ENCODE measurements at regions of chr15 and their contacts with region 1.

Region 1: DNA sequence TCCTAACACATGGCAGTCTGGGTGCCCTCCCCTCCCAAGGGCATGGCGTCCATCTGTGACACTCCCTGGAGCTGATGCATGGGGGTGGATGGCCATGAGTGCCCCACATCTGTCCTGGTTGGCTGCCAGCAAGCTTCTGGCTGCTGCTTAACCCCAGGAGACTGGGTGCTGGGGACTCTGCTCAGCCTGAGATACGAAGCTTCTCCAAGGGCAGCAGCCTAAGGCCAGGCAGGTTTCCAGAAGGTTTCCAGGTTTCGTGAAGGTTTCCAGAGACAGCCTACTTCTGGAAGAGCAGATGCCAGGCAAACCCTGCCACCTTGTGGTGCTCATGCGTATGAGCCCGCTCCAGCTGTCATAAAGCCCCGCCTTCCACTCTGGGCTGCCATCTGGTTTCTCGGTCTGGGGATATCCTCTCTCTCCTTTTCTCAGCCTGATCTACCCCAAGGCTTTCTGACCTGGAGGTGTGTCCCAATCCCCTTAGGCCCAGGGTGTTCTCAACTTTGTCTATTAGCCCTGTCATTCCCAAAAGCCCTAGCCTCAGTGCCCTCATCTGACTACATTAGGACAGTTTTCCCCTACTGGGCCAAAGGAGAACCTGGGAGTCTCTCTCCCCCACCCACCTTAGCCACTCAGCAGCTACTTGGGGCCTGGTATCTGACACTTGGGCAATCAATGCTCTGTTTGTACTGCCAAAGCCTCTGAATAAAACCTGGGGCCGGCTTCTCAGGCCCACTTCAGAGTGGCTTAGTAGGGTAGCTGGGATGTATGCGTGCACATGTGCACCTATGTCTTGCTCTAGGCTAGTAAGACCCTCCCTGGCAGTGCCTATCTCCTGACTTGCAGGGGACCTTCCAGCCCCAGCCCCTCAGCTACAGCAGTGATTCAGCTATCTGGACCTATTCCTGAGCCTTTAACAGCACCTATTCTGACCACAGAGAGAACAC is 12.0 kb downstream of the MRPL46 start:
- DNase-seq: peak; percentile 48
- ATAC-seq: peak; percentile 91
- H3K4me3 ChIP-seq: no peak overlapping the region
- H3K27ac ChIP-seq: no peak overlapping the region
- H3K4me1 ChIP-seq: peaks cover 12% of the 10 kb centered on the region; the same call in 1 of the 2 replicates
- H3K27me3 ChIP-seq: no peaks in the 10 kb centered on the region
- CTCF ChIP-seq: peak; percentile 78
- EP300 ChIP-seq: no peak
- POLR2A ChIP-seq: peak in 1 of 2 experiments; percentile 30; a peak in 1 of 4 replicates
- RAD21 ChIP-seq: peak; percentile 56; the same call in 1 of the 2 replicates

Region 2: GRCh38 chr15:88161636-88162035 is 293.5 kb before region 1 on chr15:
- CTCF ChIA-PET with region 1: no interaction called
- POLR2A ChIA-PET with region 1: no interaction called
- in situ Hi-C with region 1: no loop called
- intact Hi-C with region 1: loop called (anchors 5 kb)
- DNase-seq: no peak
- ATAC-seq: no peak
- H3K4me3 ChIP-seq: no peak overlapping the region
- H3K27ac ChIP-seq: no peak overlapping the region
- H3K4me1 ChIP-seq: no peaks in the 10 kb centered on the region
- H3K27me3 ChIP-seq: no peaks in the 10 kb centered on the region
- CTCF ChIP-seq: no peak
- EP300 ChIP-seq: no peak
- POLR2A ChIP-seq: no peak
- RAD21 ChIP-seq: no peak

Region 3: DNA sequence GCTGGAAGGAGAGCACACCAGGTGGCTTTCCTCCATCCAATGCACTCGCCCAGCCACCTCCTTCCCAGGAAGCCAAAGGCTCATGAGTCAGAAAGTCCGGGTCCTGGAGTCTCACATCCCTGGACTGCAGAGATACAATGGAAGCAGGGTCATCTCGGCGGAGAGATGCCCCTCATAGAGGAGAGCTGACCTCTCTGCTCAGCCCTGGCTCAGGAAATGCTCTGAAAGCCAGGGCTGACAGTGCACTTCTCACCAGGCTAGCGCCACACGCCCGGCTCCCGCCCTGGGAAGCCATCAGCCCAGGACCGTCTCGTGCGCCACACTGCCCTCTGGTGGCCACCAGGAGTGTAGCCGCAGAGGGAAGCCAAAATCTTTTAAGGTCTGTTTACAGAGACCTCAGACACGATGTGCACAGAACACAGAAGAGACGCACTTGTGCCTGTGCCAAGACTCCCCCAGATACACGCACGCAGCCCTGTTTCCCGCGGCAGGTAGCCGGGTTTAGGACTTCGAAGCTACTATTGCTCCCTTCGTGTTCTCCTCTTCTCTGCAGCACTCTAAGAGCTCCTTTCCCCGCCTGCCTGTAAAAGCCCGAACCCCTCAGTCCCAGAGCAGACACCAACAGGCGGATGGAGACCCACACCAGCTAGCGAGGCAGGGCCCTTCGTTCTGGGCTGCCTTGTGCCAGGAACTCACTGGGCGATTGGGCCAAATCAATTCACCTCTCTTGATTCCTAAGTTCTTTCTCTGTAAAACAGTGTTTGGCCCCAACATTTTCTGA is 208.3 kb before region 1 on chr15:
- CTCF ChIA-PET with region 1: interaction called, 3 read pairs
- POLR2A ChIA-PET with region 1: no interaction called
- in situ Hi-C with region 1: no loop called
- intact Hi-C with region 1: loop called (anchors 2 kb)
- DNase-seq: peak; percentile 44
- ATAC-seq: peak; percentile 93
- H3K4me3 ChIP-seq: no peak overlapping the region
- H3K27ac ChIP-seq: no peak overlapping the region
- H3K4me1 ChIP-seq: no peaks in the 10 kb centered on the region
- H3K27me3 ChIP-seq: peaks cover 3 to 4% of the 10 kb centered on the region in 2 experiments; a peak in 2 of 5 replicates
- CTCF ChIP-seq: peak; percentile 92
- EP300 ChIP-seq: no peak
- POLR2A ChIP-seq: no peak
- RAD21 ChIP-seq: peak; percentile 66

Region 4: GRCh38 chr15:88467073-88467934 is 12.2 kb after region 1 on chr15 and contains the starts of genes MRPL46 and MRPS11:
- CTCF ChIA-PET with region 1: no interaction called
- POLR2A ChIA-PET with region 1: interaction called, 64 read pairs
- in situ Hi-C with region 1: no loop called
- intact Hi-C with region 1: no loop called
- DNase-seq: peak; percentile 79
- ATAC-seq: peak; percentile 87
- H3K4me3 ChIP-seq: peak within 1 kb of the TSS; percentile 86 to 98 (median 91)
- H3K27ac ChIP-seq: peak within 1 kb of the TSS; percentile 91
- H3K4me1 ChIP-seq: peaks cover 55% of the 10 kb centered on the region
- H3K27me3 ChIP-seq: peaks cover 0 to 3% of the 10 kb centered on the region in 2 experiments; a peak in 1 of 5 replicates
- CTCF ChIP-seq: no peak; the same call in 1 of the 2 replicates
- EP300 ChIP-seq: no peak; a peak in 1 of 4 replicates
- POLR2A ChIP-seq: peak; percentile 76 to 78
- RAD21 ChIP-seq: no peak; the same call in 1 of the 2 replicates
- total RNA-seq, gene MRPL46: 79.2 and 107 TPM in 2 replicates
- total RNA-seq, gene MRPS11: 72.7 and 94.1 TPM in 2 replicates

Measured in HepG2 (cell line).